CD8-positive, alpha-beta T cell (primary cell): ENCODE measurements at regions of chr10 and their contacts with region 1.

Region 1: GRCh38 chr10:103244663-103245271 is 920 bp upstream of the RPEL1 start:
- DNase-seq: peak; percentile 29 to 77 (median 58)
- ATAC-seq: peak; percentile 49
- H3K4me3 ChIP-seq: no peak overlapping the region
- H3K4me3 Mint-ChIP-seq: no peak overlapping the region
- H3K27ac ChIP-seq: no peak overlapping the region
- H3K27ac Mint-ChIP-seq: no peak overlapping the region
- H3K4me1 ChIP-seq: no peaks in the 10 kb centered on the region
- H3K4me1 Mint-ChIP-seq: peaks cover 5% of the 10 kb centered on the region
- H3K27me3 ChIP-seq: no peaks in the 10 kb centered on the region
- H3K27me3 Mint-ChIP-seq: no peaks in the 10 kb centered on the region
- CTCF ChIP-seq: peak; percentile 82

Region 2: GRCh38 chr10:102729029-102730026 is 515.4 kb before region 1 on chr10:
- CTCF ChIA-PET with region 1: no interaction called
- POLR2A ChIA-PET with region 1: no interaction called
- intact Hi-C with region 1: loop called in 1 of 2 experiments (anchors 5 kb)
- DNase-seq: peak; percentile 19 to 72 (median 58)
- ATAC-seq: peak; percentile 58
- H3K4me3 ChIP-seq: no peak overlapping the region
- H3K4me3 Mint-ChIP-seq: no peak overlapping the region
- H3K27ac ChIP-seq: no peak overlapping the region
- H3K27ac Mint-ChIP-seq: no peak overlapping the region
- H3K4me1 ChIP-seq: no peaks in the 10 kb centered on the region
- H3K4me1 Mint-ChIP-seq: peaks cover 5% of the 10 kb centered on the region
- H3K27me3 ChIP-seq: no peaks in the 10 kb centered on the region
- H3K27me3 Mint-ChIP-seq: no peaks in the 10 kb centered on the region
- CTCF ChIP-seq: peak; percentile 66

Region 3: DNA sequence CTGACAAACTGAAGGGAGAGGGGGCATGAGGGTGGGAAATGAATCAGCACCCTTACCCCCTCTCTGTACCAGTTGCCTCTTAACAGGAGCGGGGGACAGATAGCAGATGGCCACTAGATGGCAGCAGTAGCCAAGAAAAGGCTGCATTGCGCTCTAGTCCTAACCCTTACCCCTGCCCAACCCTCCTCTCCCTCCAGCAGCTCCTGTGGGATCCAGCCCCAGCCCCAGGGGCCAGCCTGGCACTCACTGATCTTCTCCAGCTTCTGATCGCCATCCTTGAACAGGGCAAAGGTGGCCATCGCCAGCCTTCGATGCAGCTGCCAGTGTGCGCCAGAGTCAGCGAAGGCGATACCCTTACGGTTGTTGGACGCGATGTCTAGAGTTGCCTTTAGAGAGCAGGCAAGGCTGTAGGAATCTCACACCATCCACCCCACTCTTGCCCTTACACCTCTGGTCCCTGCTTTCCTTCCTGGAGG is 409.7 kb before region 1 on chr10:
- CTCF ChIA-PET with region 1: interaction called, 32 read pairs
- POLR2A ChIA-PET with region 1: no interaction called
- intact Hi-C with region 1: loop called in 1 of 2 experiments (anchors 1 kb)
- DNase-seq: peak; percentile 46 to 83 (median 77)
- ATAC-seq: peak; percentile 98
- H3K4me3 ChIP-seq: no peak overlapping the region
- H3K4me3 Mint-ChIP-seq: no peak overlapping the region
- H3K27ac ChIP-seq: no peak overlapping the region
- H3K27ac Mint-ChIP-seq: no peak overlapping the region
- H3K4me1 ChIP-seq: no peaks in the 10 kb centered on the region
- H3K4me1 Mint-ChIP-seq: no peaks in the 10 kb centered on the region
- H3K27me3 ChIP-seq: peaks cover 0 to 3% of the 10 kb centered on the region in 2 experiments
- H3K27me3 Mint-ChIP-seq: peaks cover 2% of the 10 kb centered on the region
- CTCF ChIP-seq: peak; percentile 80

Region 4: GRCh38 chr10:103069453-103070331 is 175.1 kb before region 1 on chr10:
- CTCF ChIA-PET with region 1: interaction called, 5 read pairs
- POLR2A ChIA-PET with region 1: no interaction called
- intact Hi-C with region 1: loop called (anchors 1 to 5 kb)
- DNase-seq: peak; percentile 45 to 85 (median 75)
- ATAC-seq: peak; percentile 96
- H3K4me3 ChIP-seq: no peak overlapping the region
- H3K4me3 Mint-ChIP-seq: peak overlapping the region; percentile 26
- H3K27ac ChIP-seq: peak overlapping the region in 1 of 2 experiments; percentile 21
- H3K27ac Mint-ChIP-seq: peak overlapping the region; percentile 66
- H3K4me1 ChIP-seq: peaks cover 20% of the 10 kb centered on the region
- H3K4me1 Mint-ChIP-seq: peaks cover 27% of the 10 kb centered on the region
- H3K27me3 ChIP-seq: no peaks in the 10 kb centered on the region
- H3K27me3 Mint-ChIP-seq: no peaks in the 10 kb centered on the region
- CTCF ChIP-seq: peak; percentile 75

Region 5: GRCh38 chr10:103102195-103102594 is 142.6 kb before region 1 on chr10:
- CTCF ChIA-PET with region 1: interaction called, 3 read pairs
- POLR2A ChIA-PET with region 1: interaction called, 3 read pairs
- intact Hi-C with region 1: loop called in 1 of 2 experiments (anchors 10 kb)
- DNase-seq: no peak
- ATAC-seq: no peak
- H3K4me3 ChIP-seq: no peak overlapping the region
- H3K4me3 Mint-ChIP-seq: no peak overlapping the region
- H3K27ac ChIP-seq: no peak overlapping the region
- H3K27ac Mint-ChIP-seq: no peak overlapping the region
- H3K4me1 ChIP-seq: no peaks in the 10 kb centered on the region
- H3K4me1 Mint-ChIP-seq: no peaks in the 10 kb centered on the region
- H3K27me3 ChIP-seq: no peaks in the 10 kb centered on the region
- H3K27me3 Mint-ChIP-seq: no peaks in the 10 kb centered on the region
- CTCF ChIP-seq: no peak

Region 6: GRCh38 chr10:103114876-103115275 is 129.9 kb before region 1 on chr10:
- CTCF ChIA-PET with region 1: no interaction called
- POLR2A ChIA-PET with region 1: no interaction called
- intact Hi-C with region 1: no loop called
- DNase-seq: no peak
- ATAC-seq: no peak
- H3K4me3 ChIP-seq: no peak overlapping the region
- H3K4me3 Mint-ChIP-seq: no peak overlapping the region
- H3K27ac ChIP-seq: no peak overlapping the region
- H3K27ac Mint-ChIP-seq: no peak overlapping the region
- H3K4me1 ChIP-seq: no peaks in the 10 kb centered on the region
- H3K4me1 Mint-ChIP-seq: peaks cover 13% of the 10 kb centered on the region
- H3K27me3 ChIP-seq: no peaks in the 10 kb centered on the region
- H3K27me3 Mint-ChIP-seq: no peaks in the 10 kb centered on the region
- CTCF ChIP-seq: no peak

Region 7: GRCh38 chr10:103192451-103193106 is 52.2 kb before region 1 on chr10:
- CTCF ChIA-PET with region 1: interaction called, 15 read pairs
- POLR2A ChIA-PET with region 1: no interaction called
- intact Hi-C with region 1: no loop called
- DNase-seq: peak; percentile 19 to 74 (median 51)
- ATAC-seq: peak; percentile 64
- H3K4me3 ChIP-seq: peak overlapping the region; percentile 68 to 85
- H3K4me3 Mint-ChIP-seq: peak overlapping the region; percentile 97
- H3K27ac ChIP-seq: peak overlapping the region; percentile 76 to 88
- H3K27ac Mint-ChIP-seq: peak overlapping the region; percentile 96
- H3K4me1 ChIP-seq: peaks cover 25% of the 10 kb centered on the region
- H3K4me1 Mint-ChIP-seq: peaks cover 41% of the 10 kb centered on the region
- H3K27me3 ChIP-seq: no peaks in the 10 kb centered on the region
- H3K27me3 Mint-ChIP-seq: no peaks in the 10 kb centered on the region
- CTCF ChIP-seq: no peak